Activated CD8-positive, alpha-beta memory T cell treated with anti-CD3 and anti-CD28 coated beads, Interleukin-2, amount 10 ng/mL, durations not matched to agents 7 days and 5 days (primary cell): ENCODE measurements at regions of chr19 and their contacts with region 1.

Region 1: DNA sequence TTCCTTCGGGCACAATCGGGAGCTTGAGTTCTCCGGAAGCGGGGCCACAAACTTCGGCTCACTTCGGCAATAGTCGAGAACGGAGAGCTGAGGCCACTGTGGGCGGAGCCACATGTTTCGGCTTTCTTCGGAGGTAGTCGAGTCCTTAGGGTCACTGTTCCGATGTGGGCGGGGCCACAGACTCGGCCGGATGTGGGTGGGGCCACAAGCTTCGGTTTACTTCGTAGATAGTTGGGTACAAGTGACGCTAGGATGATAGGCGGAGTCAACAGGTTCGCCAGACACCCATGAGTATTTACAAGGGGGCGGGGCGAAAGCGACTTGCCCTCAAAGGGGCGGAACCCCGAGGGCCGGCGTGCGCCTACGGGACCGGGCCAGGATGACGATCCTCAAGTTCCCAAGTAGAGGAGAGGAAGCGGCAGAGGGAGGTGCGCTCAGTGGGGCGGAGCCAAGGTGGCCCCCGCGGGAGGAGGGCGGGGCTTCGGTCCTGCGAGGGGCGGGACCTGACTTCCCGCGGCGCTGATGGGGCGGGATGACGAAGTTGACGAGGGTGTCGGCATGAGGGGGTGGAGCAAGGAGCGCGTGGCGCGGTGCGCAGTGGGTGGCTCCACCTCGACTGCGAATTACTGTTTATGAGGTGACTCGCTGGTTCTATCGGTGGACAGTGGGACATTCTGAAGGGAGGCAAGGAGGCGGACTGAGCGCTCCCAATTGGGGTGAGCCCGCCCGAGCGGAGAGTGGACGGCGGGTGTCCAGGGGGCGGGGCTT is 539 bp upstream of the MBOAT7 start:
- DNase-seq: peak; percentile 100
- ATAC-seq: peak; percentile 60
- H3K4me3 Mint-ChIP-seq: peak overlapping the region; percentile 80
- H3K27ac Mint-ChIP-seq: peak overlapping the region; percentile 95
- H3K4me1 Mint-ChIP-seq: peaks cover 38% of the 10 kb centered on the region
- H3K27me3 Mint-ChIP-seq: no peaks in the 10 kb centered on the region

Region 2: GRCh38 chr19:54123682-54124081 is 66.2 kb before region 1 on chr19:
- CTCF ChIA-PET with region 1: no interaction called
- DNase-seq: no peak
- ATAC-seq: no peak
- H3K4me3 Mint-ChIP-seq: no peak overlapping the region
- H3K27ac Mint-ChIP-seq: no peak overlapping the region
- H3K4me1 Mint-ChIP-seq: no peaks in the 10 kb centered on the region
- H3K27me3 Mint-ChIP-seq: no peaks in the 10 kb centered on the region

Region 3: DNA sequence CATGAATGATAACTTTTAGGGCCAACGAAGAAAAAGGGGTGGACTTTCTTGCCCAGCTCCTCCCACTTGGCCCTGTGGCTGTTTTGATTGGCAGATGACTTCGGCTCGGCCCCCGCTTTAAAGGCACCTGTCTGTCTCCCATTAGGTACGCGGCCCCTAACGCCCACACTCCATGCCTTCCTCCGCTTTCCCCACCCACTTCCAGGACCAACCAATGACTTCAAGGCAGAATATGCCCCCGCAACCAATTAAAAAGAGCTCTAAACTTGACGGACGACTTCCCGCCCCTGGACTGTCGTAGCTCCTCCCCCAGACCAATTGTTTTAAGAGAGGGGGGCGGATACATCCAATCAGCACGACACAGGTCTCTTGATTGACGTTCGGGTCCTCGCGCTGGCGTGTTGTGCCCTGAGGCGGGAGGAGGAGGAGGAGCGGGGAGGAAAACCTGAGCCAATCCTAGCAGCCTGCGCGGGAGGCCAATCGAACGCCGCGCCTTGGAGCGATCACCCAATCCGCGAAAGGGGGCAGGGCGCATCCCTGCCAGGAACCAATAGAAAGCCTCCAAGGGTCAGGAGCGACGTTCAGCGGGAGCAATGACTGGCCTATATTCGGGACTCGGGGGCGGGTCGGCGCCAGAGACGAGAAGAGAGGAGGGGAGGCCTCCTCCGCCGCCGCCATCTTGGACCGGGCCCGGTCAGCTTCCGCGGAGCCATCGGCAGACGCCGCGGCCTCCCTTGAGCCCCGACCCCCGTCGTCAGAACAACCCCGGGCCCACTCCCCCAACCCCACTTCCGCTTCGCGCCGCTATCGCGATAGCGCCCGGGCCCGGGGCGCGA is 52.6 kb before region 1 on chr19 and contains the start of gene CNOT3:
- CTCF ChIA-PET with region 1: interaction called, 11 read pairs
- DNase-seq: peak; percentile 100
- ATAC-seq: peak; percentile 87
- H3K4me3 Mint-ChIP-seq: peak within 1 kb of the TSS; percentile 80
- H3K27ac Mint-ChIP-seq: peak within 1 kb of the TSS; percentile 90
- H3K4me1 Mint-ChIP-seq: peaks cover 41% of the 10 kb centered on the region
- H3K27me3 Mint-ChIP-seq: no peaks in the 10 kb centered on the region
- total RNA-seq, gene CNOT3: 67.5 to 83.1 TPM

Region 4: GRCh38 chr19:54159352-54160181 is 30.4 kb before region 1 on chr19 and contains the start of gene LENG1:
- CTCF ChIA-PET with region 1: interaction called, 13 read pairs
- DNase-seq: peak; percentile 100
- ATAC-seq: peak; percentile 89
- H3K4me3 Mint-ChIP-seq: peak within 1 kb of the TSS; percentile 95
- H3K27ac Mint-ChIP-seq: peak within 1 kb of the TSS; percentile 98
- H3K4me1 Mint-ChIP-seq: peaks cover 64% of the 10 kb centered on the region
- H3K27me3 Mint-ChIP-seq: peaks cover 4% of the 10 kb centered on the region
- total RNA-seq, gene LENG1: 8.0 to 8.6 TPM

Region 5: DNA sequence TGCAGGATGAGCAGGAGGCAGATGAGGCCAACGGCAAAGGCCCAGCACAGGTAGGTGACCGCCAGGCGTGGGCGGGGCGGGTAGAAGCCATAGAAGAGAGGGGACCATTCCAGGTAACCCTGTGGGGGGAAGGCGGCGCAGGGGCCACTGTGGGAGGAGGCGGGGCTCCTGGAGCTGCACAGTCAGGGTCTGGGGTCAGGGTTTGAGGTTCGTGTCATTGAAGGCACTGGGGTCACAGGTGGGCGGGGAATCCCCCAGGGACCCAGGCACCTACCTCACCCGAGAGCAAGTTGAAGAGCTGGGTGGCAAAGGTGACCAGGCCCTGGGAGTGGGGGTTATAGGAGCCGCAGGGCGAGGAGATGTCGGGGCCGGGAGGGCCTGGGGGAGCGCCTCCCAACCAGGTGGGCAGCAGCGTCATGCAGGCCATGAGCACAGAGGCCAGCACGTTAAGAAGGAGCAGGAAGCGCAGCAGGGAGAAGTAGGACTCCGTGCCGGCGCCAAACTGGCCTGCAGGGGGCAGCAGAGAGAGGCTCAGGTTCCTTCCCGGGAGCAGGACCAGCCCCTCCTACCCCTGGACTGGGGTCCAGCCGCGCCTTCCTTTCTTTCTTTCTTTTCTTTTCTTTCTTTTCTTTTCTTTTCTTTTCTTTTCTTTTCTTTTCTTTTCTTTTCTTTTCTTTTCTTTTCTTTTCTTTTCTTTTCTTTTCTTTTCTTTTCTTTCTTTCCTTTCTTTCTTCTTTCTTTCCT is 21.6 kb before region 1 on chr19:
- CTCF ChIA-PET with region 1: interaction called, 15 read pairs
- DNase-seq: peak; percentile 92
- ATAC-seq: peak; percentile 91
- H3K4me3 Mint-ChIP-seq: no peak overlapping the region
- H3K27ac Mint-ChIP-seq: no peak overlapping the region
- H3K4me1 Mint-ChIP-seq: peaks cover 13% of the 10 kb centered on the region
- H3K27me3 Mint-ChIP-seq: peaks cover 8% of the 10 kb centered on the region

Region 6: DNA sequence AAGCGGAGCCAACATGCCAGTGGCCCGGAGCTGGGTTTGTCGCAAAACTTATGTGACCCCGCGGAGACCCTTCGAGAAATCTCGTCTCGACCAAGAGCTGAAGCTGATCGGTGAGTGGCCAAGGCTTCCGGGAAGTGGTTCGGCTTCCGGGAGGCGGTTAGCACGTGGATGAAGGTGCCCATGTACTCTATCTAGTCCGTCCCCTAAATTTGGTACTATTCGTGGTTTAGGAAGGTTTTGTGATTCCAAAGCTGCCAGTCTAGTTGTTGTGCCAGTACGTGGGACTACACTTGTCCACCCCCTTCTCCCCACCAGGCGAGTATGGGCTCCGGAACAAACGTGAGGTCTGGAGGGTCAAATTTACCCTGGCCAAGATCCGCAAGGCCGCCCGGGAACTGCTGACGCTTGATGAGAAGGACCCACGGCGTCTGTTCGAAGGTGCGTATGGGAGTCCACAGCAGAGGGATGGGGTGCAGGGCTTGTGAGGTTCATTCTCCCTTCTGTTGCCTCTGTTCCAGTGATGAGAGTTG is 11.3 kb after region 1 on chr19:
- CTCF ChIA-PET with region 1: interaction called, 33 read pairs
- DNase-seq: peak; percentile 55
- ATAC-seq: no peak
- H3K4me3 Mint-ChIP-seq: peak overlapping the region; percentile 88
- H3K27ac Mint-ChIP-seq: peak overlapping the region; percentile 99
- H3K4me1 Mint-ChIP-seq: peaks cover 50% of the 10 kb centered on the region
- H3K27me3 Mint-ChIP-seq: no peaks in the 10 kb centered on the region

Region 7: GRCh38 chr19:54335164-54335563 is 145.2 kb after region 1 on chr19:
- CTCF ChIA-PET with region 1: no interaction called
- DNase-seq: no peak
- ATAC-seq: no peak
- H3K4me3 Mint-ChIP-seq: no peak overlapping the region
- H3K27ac Mint-ChIP-seq: no peak overlapping the region
- H3K4me1 Mint-ChIP-seq: no peaks in the 10 kb centered on the region
- H3K27me3 Mint-ChIP-seq: peaks cover 21% of the 10 kb centered on the region

Region 8: GRCh38 chr19:54430306-54431254 is 240.7 kb after region 1 on chr19:
- CTCF ChIA-PET with region 1: no interaction called
- DNase-seq: no peak
- ATAC-seq: peak; percentile 87
- H3K4me3 Mint-ChIP-seq: no peak overlapping the region
- H3K27ac Mint-ChIP-seq: no peak overlapping the region
- H3K4me1 Mint-ChIP-seq: peaks cover 11% of the 10 kb centered on the region
- H3K27me3 Mint-ChIP-seq: peaks cover 7% of the 10 kb centered on the region